ENCODE measurements at regions of chr5 and their contacts with region 1.

Region 1: DNA sequence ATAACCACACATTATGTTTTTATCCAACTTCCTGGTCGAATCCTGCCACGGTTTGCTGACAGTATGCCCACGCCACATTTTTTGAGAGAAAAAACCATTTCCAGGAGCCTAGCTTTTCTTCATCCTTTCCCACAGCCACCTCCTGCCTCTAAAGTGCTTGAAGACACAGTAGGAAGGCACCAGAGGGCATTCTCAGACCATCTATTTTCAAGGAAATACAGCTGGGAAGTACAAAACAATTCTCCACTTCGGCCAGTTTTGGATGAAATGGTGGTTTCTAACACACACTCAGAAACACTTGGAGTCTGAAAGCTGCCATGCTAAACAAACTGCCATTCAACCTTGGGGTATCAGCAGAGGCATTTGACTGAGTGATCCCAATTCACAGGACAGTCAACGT is 86.3 kb upstream of the RPS23 start:
- DNase-seq: no peak
- H3K4me3 Mint-ChIP-seq: no peak overlapping the region
- H3K27ac Mint-ChIP-seq: no peak overlapping the region
- H3K4me1 Mint-ChIP-seq: peaks cover 25% of the 10 kb centered on the region
- H3K27me3 Mint-ChIP-seq: no peaks in the 10 kb centered on the region

Region 2: DNA sequence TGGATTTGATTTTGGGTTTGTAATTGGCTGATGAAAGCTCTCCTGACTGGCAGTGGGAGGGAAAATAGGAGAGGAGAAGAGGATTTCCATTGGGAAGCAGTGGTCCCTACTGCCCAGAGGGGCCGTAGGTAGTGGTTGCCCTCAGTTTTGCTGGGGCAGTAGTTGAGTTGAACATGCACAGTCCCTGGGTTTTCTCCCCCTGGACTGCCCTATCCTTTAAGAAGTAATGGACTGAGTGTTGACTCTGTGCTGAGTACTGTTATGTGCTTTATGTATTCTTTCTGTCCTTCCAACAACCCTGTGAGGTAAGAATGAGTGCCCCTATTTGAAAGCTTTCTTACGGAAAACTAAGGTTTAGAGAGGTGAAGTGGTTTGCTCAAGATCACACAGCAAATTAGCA is 24.9 kb after region 1 on chr5:
- CTCF ChIA-PET with region 1: no interaction called
- POLR2A ChIA-PET with region 1: interaction called, 6 read pairs
- intact Hi-C with region 1: loop called (anchors 1 kb)
- DNase-seq: no peak
- H3K4me3 Mint-ChIP-seq: peak overlapping the region; percentile 0
- H3K27ac Mint-ChIP-seq: peak overlapping the region; percentile 76
- H3K4me1 Mint-ChIP-seq: peaks cover 18% of the 10 kb centered on the region
- H3K27me3 Mint-ChIP-seq: no peaks in the 10 kb centered on the region

Region 3: DNA sequence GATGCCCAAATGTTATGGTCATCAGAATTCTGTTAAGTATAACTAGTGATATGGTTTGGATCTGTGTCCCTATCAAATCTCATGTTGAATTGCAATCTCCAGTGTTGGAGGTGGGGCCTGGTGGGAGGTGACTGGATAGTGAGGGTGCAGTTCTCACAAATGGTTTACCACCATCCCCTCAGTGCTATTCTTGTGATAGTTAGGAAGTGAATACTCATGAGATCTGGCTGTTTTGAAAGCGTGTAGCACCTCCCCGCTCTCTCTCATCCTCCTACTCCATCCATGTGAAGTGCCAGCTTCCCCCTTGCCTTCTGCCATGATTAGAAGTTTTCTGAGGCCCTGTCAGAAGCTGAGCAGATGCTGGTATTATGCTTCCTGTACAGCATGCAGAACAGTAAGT is 353.2 kb after region 1 on chr5:
- CTCF ChIA-PET with region 1: no interaction called
- POLR2A ChIA-PET with region 1: no interaction called
- intact Hi-C with region 1: no loop called
- DNase-seq: no peak
- H3K4me3 Mint-ChIP-seq: no peak overlapping the region
- H3K27ac Mint-ChIP-seq: no peak overlapping the region
- H3K4me1 Mint-ChIP-seq: peaks cover 3% of the 10 kb centered on the region
- H3K27me3 Mint-ChIP-seq: peaks cover 1% of the 10 kb centered on the region

Region 4: DNA sequence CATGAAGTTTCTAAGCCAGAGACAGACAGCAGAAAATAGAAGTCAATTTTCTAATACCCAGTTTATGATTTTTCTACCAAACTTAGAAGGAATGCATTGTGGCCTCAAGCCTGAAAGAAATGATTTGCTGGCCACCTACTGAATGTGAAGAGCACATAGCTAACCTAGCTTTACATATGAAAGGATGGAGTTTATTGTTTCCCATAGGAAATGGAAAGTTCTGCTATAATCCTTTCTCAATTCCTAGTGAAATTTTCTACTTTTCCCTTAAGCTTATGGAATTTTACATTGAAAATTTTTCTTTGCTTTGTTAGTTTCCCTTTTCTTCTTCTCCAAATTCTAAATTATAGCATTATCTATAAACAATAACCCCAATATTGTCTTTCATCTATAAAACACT is 602.6 kb after region 1 on chr5:
- CTCF ChIA-PET with region 1: no interaction called
- POLR2A ChIA-PET with region 1: no interaction called
- intact Hi-C with region 1: loop called (anchors 2 kb)
- DNase-seq: no peak
- H3K4me3 Mint-ChIP-seq: no peak overlapping the region
- H3K27ac Mint-ChIP-seq: no peak overlapping the region
- H3K4me1 Mint-ChIP-seq: peaks cover 18% of the 10 kb centered on the region
- H3K27me3 Mint-ChIP-seq: no peaks in the 10 kb centered on the region

Measured in activated CD4-positive, alpha-beta memory T cell treated with anti-CD3 and anti-CD28 coated beads for 36 hours (primary cell).